ENCODE measurements at regions of chrX and their contacts with region 1.

Region 1: GRCh38 chrX:130916636-130917422 is 13.8 kb upstream of the ENOX2 start:
- DNase-seq: peak in 1 of 2 donors; percentile 11
- ATAC-seq: peak in 1 of 2 donors; percentile 39
- H3K4me3 ChIP-seq: no peak overlapping the region
- H3K27ac ChIP-seq: no peak overlapping the region
- H3K4me1 ChIP-seq: no peaks in the 10 kb centered on the region
- H3K27me3 ChIP-seq: peaks cover 0 to 3% (median 0%) of the 10 kb centered on the region in 3 donors
- CTCF ChIP-seq: peak; percentile 49 to 75 (median 70)
- POLR2A ChIP-seq: no peak

Region 2: DNA sequence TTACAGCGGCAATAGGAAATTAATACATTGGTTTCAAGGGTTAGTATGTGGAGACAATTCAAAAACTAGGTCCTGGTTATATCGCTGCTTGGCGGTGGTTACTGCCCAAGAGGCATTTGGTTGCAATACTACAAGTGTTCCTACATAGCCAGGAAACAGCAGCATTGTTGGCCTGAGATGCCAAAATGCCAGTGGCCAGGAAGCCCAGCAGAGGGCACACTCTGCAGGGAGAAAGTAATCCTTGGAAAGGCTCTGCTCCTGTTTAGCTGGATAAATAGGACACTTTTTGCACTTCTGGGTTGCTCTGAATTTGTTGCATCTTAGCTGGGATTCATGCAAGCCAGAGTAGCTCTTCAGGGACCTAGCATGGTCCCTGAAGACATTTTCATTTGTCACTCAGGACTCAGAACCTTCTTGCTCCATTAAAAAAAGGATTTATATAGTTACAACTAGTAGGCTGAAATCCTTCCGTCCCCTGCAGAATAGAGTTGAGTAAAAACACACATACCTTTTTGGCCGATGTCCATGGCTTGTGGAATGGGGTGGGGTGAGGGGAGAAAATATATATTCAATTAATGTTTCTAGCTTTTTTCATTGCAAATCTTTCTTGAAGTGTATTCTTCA is 523.3 kb before region 1 on chrX:
- in situ Hi-C with region 1: loop called (anchors 10 to 25 kb)
- intact Hi-C with region 1: no loop called
- DNase-seq: peak in 1 of 2 donors; percentile 15
- ATAC-seq: no peak
- H3K4me3 ChIP-seq: no peak overlapping the region
- H3K27ac ChIP-seq: no peak overlapping the region
- H3K4me1 ChIP-seq: no peaks in the 10 kb centered on the region
- H3K27me3 ChIP-seq: no peaks in the 10 kb centered on the region
- CTCF ChIP-seq: peak in 2 of 5 experiments; percentile 42 to 53
- POLR2A ChIP-seq: no peak

Region 3: DNA sequence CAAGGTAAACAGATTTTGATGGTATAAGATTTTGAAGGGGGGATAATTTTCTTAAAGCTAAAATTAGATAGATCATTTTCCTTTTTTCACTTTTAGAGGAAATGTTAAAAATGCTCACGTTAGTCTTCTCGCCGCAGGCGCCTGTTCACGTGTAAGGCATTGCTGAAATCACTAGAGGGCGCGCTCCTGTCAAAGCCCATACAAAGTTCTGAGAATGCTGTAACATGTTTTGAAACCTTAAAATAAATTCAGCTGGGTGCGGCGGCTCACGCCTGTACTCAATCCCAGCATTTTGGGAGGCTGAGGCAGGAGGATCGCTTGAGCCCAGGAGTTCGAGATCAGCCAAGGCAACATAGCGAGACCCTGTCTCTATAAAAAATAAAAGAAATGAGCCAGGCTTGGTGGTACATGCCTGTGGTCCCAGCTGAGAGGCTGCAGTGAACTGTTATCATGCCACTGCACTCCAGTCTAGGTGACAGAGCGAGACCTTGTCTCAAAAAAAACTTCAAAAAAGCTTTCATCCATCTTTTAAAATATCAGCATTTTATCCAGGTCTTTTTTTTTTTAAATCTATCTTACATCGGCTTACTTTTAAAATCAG is 377.0 kb before region 1 on chrX:
- in situ Hi-C with region 1: loop called in 3 of 4 experiments (anchors 5 to 10 kb)
- intact Hi-C with region 1: loop called (anchors 1 kb)
- DNase-seq: no peak
- ATAC-seq: peak in 1 of 2 donors; percentile 51
- H3K4me3 ChIP-seq: no peak overlapping the region
- H3K27ac ChIP-seq: no peak overlapping the region
- H3K4me1 ChIP-seq: no peaks in the 10 kb centered on the region
- H3K27me3 ChIP-seq: no peaks in the 10 kb centered on the region
- CTCF ChIP-seq: peak in 4 of 5 experiments; percentile 14 to 60 (median 34)
- POLR2A ChIP-seq: no peak

Region 4: DNA sequence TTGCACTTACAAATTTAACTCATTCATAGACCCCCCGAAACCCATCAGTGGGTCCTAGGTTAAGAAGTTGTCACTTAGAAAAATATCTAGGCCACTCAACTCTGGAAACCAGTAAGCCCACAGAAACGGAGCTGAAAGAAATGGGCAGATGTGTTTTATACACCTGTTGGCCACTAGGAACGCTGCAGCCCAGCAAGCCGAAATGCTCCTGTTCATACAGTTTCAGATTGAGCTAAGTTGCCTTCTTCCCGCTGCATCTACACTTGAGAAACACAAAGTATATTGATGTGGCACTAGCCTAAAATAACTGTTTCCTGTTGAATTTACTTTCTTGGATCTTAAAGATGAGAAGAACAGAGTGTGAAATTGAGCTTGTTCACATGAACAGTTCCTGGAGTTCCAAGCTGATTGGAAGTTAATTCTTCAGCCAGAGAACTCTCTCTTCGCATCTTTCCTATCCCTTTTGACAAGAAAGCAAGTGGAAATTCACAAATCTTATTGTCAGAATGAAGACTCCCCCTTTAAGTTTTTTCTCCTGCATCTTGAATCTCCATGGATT is 340.9 kb before region 1 on chrX:
- in situ Hi-C with region 1: loop called in 2 of 4 experiments (anchors 10 to 25 kb)
- intact Hi-C with region 1: loop called (anchors 2 kb)
- DNase-seq: no peak
- ATAC-seq: no peak
- H3K4me3 ChIP-seq: no peak overlapping the region
- H3K27ac ChIP-seq: no peak overlapping the region
- H3K4me1 ChIP-seq: no peaks in the 10 kb centered on the region
- H3K27me3 ChIP-seq: peaks cover 0 to 4% (median 0%) of the 10 kb centered on the region in 3 donors
- CTCF ChIP-seq: peak; percentile 37 to 70 (median 54)
- POLR2A ChIP-seq: no peak

Region 5: GRCh38 chrX:131356725-131357124 is 439.9 kb after region 1 on chrX:
- in situ Hi-C with region 1: no loop called
- intact Hi-C with region 1: no loop called
- DNase-seq: no peak
- ATAC-seq: no peak
- H3K4me3 ChIP-seq: no peak overlapping the region
- H3K27ac ChIP-seq: no peak overlapping the region
- H3K4me1 ChIP-seq: no peaks in the 10 kb centered on the region
- H3K27me3 ChIP-seq: no peaks in the 10 kb centered on the region
- CTCF ChIP-seq: no peak
- POLR2A ChIP-seq: no peak

Measured in gastrocnemius medialis (tissue), 4 donors.